Mammary epithelial cell (primary cell): ENCODE measurements at regions of chr2 and their contacts with region 1.

Region 1: GRCh38 chr2:102082571-102083392 is 59.8 kb upstream of the IL1R1 start:
- DNase-seq: peak; percentile 88
- H3K4me3 ChIP-seq: no peak overlapping the region
- H3K27ac ChIP-seq: peak overlapping the region; percentile 52
- H3K4me1 ChIP-seq: peaks cover 19% of the 10 kb centered on the region
- H3K27me3 ChIP-seq: no peaks in the 10 kb centered on the region
- CTCF ChIP-seq: no peak

Region 2: GRCh38 chr2:101983928-101984327 is 98.9 kb before region 1 on chr2:
- CTCF ChIA-PET with region 1: no interaction called
- dilution Hi-C with region 1: no loop called
- in situ Hi-C with region 1: no loop called
- intact Hi-C with region 1: no loop called
- DNase-seq: peak; percentile 8
- H3K4me3 ChIP-seq: no peak overlapping the region
- H3K27ac ChIP-seq: no peak overlapping the region
- H3K4me1 ChIP-seq: peaks cover 73% of the 10 kb centered on the region
- H3K27me3 ChIP-seq: no peaks in the 10 kb centered on the region
- CTCF ChIP-seq: peak; percentile 39 to 69

Region 3: DNA sequence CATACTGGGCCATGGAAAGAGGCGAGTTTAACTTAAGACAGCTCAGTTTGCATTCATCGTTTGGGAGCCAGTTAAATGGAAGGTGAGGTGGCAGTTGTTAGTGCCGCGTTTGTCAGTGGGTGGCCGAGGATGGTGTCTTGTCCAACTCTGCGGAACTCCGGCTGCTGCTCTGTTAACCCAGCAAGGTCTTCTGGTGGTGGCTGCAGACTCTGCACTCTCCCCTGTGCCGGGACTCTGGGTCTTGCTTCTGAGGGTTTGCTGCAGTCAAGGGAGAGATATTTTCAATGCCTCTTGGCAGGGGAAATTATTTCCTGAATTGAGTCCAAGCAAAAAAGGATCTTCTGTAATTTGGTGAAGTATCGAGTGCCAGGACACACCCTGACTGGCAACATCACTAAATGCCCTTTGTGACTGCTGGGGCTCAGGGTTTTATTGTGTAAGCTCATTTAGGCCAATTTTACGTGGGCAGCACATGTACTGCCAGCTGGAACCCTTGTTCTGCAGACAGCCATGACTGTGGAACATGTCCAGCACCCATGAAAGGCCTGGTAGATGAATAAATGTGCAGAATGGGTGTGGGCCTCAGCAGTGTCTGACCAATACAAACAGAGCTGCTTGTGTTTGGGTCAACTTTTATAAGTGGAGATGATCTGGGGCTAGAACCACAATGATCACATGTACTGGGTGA is 32.9 kb before region 1 on chr2:
- CTCF ChIA-PET with region 1: no interaction called
- dilution Hi-C with region 1: loop called (anchors 5 kb)
- in situ Hi-C with region 1: no loop called
- intact Hi-C with region 1: no loop called
- DNase-seq: no peak
- H3K4me3 ChIP-seq: no peak overlapping the region
- H3K27ac ChIP-seq: no peak overlapping the region
- H3K4me1 ChIP-seq: peaks cover 7% of the 10 kb centered on the region
- H3K27me3 ChIP-seq: no peaks in the 10 kb centered on the region
- CTCF ChIP-seq: no peak

Region 4: DNA sequence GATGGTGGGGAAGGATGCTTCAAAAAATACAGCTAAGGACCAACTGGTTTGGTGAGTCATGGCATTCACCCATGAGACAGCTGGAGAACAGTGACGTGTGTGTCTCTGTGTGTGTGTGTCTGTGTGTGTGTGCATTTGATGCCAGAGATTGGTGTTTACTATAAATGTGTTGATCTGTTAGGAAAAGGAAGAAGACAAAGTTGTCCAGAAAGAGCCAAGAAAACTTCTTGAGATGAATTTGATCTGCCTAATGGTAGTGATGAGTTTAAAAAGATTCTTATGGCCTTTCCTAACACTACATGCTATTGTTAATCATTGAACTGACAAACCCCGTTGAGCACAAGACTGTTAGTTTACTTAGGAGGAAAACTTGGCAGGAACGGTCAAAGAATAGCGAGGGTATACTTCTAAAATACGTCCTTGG is 23.4 kb after region 1 on chr2:
- CTCF ChIA-PET with region 1: interaction called, 13 read pairs
- dilution Hi-C with region 1: no loop called
- in situ Hi-C with region 1: no loop called
- intact Hi-C with region 1: no loop called
- DNase-seq: no peak
- H3K4me3 ChIP-seq: no peak overlapping the region
- H3K27ac ChIP-seq: no peak overlapping the region
- H3K4me1 ChIP-seq: peaks cover 4% of the 10 kb centered on the region
- H3K27me3 ChIP-seq: no peaks in the 10 kb centered on the region
- CTCF ChIP-seq: no peak